ENCODE measurements at regions of chr19 and their contacts with region 1.

Region 1: DNA sequence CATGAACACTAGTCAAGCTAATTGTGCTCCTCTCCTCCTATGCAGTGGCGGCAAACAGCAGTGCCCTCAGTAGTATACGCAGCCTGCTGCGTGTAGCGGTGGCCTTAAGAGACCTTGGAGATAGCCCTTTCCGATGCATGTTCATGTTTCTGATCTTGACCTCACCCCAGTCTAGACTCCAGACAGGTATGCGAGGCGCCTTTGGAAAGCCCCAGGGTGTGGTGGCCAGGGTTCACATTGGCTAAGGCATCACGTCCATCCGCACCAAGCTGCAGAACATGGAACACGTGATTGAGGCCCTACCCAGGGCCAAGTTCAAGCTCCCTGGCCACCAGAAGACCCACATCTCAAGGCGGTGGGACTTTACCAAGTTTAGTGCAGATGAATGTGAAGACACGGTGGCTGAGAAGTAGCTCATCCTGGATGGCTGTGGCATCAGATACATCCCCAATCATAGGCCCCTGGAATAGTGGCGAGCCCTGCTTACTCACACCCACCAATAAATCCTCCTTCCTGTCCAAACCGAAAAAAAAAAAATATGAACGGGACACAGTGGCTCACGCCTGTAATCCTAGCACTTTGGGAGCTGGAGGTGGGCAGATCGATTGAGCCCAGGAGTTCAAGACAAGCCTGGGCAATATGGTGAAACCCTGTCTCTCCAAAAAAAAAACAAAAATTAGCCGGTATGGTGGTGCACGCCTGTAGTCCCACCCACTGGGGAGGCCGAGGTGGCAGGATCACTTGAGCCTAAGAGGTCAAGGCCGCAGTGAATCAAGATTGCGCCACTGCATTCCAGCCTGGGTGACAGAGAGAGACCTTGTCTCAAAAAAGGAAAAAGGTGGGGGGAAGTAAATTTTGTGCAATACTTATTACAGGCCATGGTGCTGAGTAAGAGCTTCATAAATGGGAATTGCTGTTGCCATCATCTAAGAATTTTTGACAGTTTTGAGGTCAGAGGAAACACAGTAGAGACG is 12.4 kb upstream of the CBLC start:
- DNase-seq: peak in 2 of 3 donors; percentile 78 to 80
- ATAC-seq: peak; percentile 29 to 69 (median 58)
- H3K4me3 ChIP-seq: no peak overlapping the region
- H3K27ac ChIP-seq: peak overlapping the region in 1 of 3 donors; percentile 37
- H3K4me1 ChIP-seq: peaks cover 0 to 6% (median 3%) of the 10 kb centered on the region in 4 donors
- H3K27me3 ChIP-seq: no peaks in the 10 kb centered on the region
- CTCF ChIP-seq: no peak
- POLR2A ChIP-seq: no peak

Region 2: DNA sequence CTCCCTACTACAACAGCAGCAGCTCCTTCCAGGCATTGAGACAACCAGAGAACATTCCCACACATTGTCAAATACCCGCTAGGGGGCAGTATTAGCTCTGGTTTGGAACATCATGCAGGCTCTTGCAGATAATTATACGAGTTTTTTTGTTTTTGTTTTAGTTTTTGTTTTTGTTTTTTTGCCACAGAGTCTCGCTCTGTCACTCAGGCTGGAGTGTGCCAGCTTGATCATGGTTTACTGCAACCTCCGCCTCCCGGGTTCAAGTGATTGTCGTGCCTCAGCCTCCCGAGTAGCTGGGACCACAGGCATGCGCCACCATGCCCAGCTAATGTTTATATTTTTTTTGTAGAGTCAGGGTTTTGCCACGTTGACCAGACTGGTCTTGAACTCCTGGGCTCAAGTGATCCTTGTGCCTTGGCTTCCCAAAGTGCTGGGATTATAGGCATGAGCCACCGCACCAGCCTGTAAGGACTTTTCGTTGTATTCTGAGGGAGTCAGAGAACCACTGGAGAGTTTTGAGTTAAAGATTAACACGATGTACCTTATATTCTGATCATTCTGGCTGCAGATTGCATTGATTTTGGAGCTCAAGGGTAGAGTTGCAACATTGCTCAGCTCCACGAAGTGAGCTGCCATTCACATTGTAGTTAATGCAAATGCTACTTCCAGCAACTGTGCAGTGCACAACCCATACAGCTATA is 194.1 kb before region 1 on chr19:
- intact Hi-C with region 1: loop called in 1 of 2 experiments (anchors 10 kb)
- DNase-seq: peak in 1 of 3 donors; percentile 75
- ATAC-seq: peak; percentile 82 to 88 (median 87)
- H3K4me3 ChIP-seq: peak overlapping the region; percentile 18 to 49 (median 42)
- H3K27ac ChIP-seq: peak overlapping the region in 2 of 3 donors; percentile 34 to 59
- H3K4me1 ChIP-seq: peaks cover 0 to 13% (median 6%) of the 10 kb centered on the region in 4 donors
- H3K27me3 ChIP-seq: no peaks in the 10 kb centered on the region
- CTCF ChIP-seq: peak; percentile 75 to 88 (median 82)
- POLR2A ChIP-seq: no peak

Region 3: DNA sequence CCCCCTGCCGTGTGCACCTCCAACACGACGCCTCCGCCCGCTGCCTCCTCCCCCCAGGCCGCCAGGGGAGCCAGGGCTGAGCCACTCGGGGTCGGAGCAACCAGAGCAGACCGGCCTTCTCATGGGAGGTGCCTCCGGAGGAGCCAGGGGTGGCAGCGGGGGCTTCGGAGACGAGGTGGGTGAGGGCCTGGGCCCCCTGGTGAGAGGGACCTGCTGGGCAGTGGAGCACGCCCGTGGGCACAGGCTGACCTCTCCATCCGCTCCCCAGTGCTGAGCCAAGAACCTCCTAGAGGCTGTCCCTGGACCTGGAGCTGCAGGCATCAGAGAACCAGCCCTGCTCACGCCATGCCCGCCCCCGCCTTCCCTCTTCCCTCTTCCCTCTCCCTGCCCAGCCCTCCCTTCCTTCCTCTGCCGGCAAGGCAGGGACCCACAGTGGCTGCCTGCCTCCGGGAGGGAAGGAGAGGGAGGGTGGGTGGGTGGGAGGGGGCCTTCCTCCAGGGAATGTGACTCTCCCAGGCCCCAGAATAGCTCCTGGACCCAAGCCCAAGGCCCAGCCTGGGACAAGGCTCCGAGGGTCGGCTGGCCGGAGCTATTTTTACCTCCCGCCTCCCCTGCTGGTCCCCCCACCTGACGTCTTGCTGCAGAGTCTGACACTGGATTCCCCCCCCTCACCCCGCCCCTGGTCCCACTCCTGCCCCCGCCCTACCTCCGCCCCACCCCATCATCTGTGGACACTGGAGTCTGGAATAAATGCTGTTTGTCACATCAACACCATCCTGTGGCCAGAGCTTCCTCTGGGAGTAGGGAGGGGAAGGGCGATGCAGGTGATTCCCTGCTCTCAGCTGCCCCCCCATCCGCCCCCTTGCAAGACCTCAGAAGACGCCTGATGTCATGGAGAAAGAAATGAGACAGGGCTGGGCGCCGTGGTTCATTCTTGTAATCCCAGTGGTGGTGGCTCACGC is 55.7 kb after region 1 on chr19:
- intact Hi-C with region 1: no loop called
- DNase-seq: peak in 1 of 3 donors; percentile 63
- ATAC-seq: peak; percentile 57 to 76 (median 64)
- H3K4me3 ChIP-seq: no peak overlapping the region
- H3K27ac ChIP-seq: no peak overlapping the region
- H3K4me1 ChIP-seq: peaks cover 0 to 9% (median 4%) of the 10 kb centered on the region in 4 donors
- H3K27me3 ChIP-seq: no peaks in the 10 kb centered on the region
- CTCF ChIP-seq: no peak
- POLR2A ChIP-seq: no peak

Measured in right lobe of liver (tissue), 6 donors.